Activated naive CD4-positive, alpha-beta T cell treated with anti-CD3 and anti-CD28 coated beads for 36 hours (primary cell): ENCODE measurements at regions of chr15 and their contacts with region 1.

Region 1: DNA sequence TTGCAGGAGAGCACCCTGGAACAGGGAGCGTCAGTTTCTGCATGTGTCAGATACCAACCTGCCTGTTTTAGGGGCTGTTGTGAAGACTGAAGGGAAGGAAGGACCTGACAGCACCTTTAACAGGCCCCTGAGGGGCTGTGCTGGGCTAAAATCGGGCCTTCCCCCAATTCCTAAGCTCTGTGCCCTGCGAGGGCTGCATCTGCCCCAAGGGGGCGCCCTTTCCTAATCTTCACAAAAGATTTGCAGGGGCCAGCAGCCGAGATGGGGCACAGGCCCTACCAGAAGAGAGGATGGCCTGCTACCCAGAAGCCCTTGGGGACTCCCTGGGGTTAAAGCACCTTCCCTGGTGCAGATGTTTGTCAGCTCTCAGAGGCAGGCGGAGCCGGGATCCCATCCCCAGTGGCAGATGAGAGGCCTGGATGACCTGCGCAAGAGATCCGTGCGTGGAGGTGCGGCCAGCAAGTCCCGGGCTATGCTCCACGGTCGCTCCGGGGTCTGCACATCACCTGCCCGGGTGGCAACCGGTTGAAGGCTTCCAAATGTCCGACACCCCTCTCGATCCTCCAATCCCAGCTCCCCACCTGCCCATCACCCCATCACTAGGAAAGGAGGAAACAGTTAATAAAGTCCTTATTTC is 53.6 kb downstream of the RHCG start:
- DNase-seq: peak; percentile 74
- H3K4me3 Mint-ChIP-seq: no peak overlapping the region
- H3K27ac Mint-ChIP-seq: no peak overlapping the region
- H3K4me1 Mint-ChIP-seq: no peaks in the 10 kb centered on the region
- H3K27me3 Mint-ChIP-seq: peaks cover 13% of the 10 kb centered on the region

Region 2: GRCh38 chr15:89472785-89473256 is 30.0 kb after region 1 on chr15:
- CTCF ChIA-PET with region 1: interaction called, 11 read pairs
- intact Hi-C with region 1: loop called (anchors 2 kb)
- DNase-seq: peak; percentile 63
- H3K4me3 Mint-ChIP-seq: no peak overlapping the region
- H3K27ac Mint-ChIP-seq: no peak overlapping the region
- H3K4me1 Mint-ChIP-seq: peaks cover 2% of the 10 kb centered on the region
- H3K27me3 Mint-ChIP-seq: peaks cover 10% of the 10 kb centered on the region

Region 3: DNA sequence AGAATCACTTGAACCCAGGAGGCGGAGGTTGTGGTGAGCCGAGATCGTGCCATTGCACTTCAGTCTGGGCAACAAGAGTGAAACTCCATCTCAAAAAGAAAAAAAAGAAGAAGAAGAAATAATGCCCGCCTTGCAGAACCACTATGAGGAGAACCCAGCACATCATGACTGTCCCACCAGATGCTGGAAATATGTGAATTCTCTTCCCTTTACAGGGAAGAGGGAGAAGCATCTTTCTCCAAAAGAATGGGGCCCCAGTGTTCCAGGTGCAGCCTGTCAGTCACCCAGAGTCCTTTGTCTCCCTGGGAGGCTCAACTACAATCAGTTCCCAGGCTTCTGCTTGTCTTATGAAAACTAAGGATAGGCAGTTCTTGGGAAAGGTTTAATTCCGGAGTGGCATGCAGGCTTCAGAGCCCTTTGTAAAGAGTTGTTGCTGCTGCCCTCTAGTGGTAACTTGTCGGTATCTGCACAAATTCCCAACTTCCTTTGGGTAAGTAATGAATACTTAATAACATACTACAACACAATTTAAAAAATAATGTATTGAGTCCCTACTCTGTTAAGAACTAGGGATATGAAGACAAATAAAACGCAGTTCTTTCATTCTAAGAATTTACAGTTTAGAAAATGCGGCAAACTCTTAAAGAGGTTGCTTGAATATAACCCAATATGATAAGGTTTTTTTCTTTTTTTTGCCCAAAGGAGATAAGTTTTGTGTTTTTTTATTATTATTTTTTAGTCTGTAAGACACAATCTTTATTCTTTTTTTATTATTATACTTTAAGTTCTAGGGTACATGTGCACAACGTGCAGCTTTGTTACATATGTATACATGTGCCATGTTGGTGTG is 113.8 kb after region 1 on chr15:
- CTCF ChIA-PET with region 1: interaction called, 4 read pairs
- intact Hi-C with region 1: loop called (anchors 1 kb)
- DNase-seq: peak; percentile 71
- H3K4me3 Mint-ChIP-seq: no peak overlapping the region
- H3K27ac Mint-ChIP-seq: no peak overlapping the region
- H3K4me1 Mint-ChIP-seq: no peaks in the 10 kb centered on the region
- H3K27me3 Mint-ChIP-seq: peaks cover 8% of the 10 kb centered on the region

Region 4: GRCh38 chr15:89614164-89614563 is 171.4 kb after region 1 on chr15:
- CTCF ChIA-PET with region 1: no interaction called
- intact Hi-C with region 1: no loop called
- DNase-seq: no peak
- H3K4me3 Mint-ChIP-seq: no peak overlapping the region
- H3K27ac Mint-ChIP-seq: no peak overlapping the region
- H3K4me1 Mint-ChIP-seq: no peaks in the 10 kb centered on the region
- H3K27me3 Mint-ChIP-seq: no peaks in the 10 kb centered on the region